Caco-2 (cell line): ENCODE measurements at regions of chr12 and their contacts with region 1.

Region 1: GRCh38 chr12:45191239-45191638 is 24.7 kb upstream of the ANO6 start:
- DNase-seq: no peak
- H3K4me3 ChIP-seq: no peak overlapping the region
- H3K4me3 Mint-ChIP-seq: no peak overlapping the region
- H3K27ac Mint-ChIP-seq: peak overlapping the region; percentile 95
- H3K4me1 ChIP-seq: peaks cover 57% of the 10 kb centered on the region
- H3K4me1 Mint-ChIP-seq: peaks cover 44% of the 10 kb centered on the region
- H3K27me3 ChIP-seq: no peaks in the 10 kb centered on the region
- H3K27me3 Mint-ChIP-seq: no peaks in the 10 kb centered on the region
- CTCF ChIP-seq: no peak

Region 2: DNA sequence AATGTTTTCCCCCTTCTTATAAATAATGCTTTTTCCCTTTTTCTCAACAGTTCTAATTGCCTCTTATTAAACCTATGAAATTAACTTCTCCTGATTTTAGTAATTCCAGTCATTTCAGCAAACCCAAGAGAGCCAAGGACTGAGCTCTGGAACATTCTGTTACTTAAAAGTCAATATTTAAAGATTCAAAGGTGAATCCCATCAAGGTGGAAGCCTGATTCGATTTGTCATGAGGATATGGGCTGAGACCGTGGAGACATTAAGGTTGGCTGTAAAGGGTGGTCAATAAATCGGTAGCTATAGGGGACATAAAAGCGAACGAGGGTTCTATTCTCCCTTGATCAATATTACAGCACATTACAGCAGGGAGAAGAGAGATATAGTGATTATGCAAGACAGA is 248.5 kb before region 1 on chr12:
- CTCF ChIA-PET with region 1: no interaction called
- POLR2A ChIA-PET with region 1: no interaction called
- intact Hi-C with region 1: no loop called
- DNase-seq: no peak
- H3K4me3 ChIP-seq: no peak overlapping the region
- H3K4me3 Mint-ChIP-seq: no peak overlapping the region
- H3K27ac Mint-ChIP-seq: no peak overlapping the region
- H3K4me1 ChIP-seq: peaks cover 10% of the 10 kb centered on the region; the same call in 1 of the 2 replicates
- H3K4me1 Mint-ChIP-seq: peaks cover 9% of the 10 kb centered on the region
- H3K27me3 ChIP-seq: no peaks in the 10 kb centered on the region
- H3K27me3 Mint-ChIP-seq: peaks cover 5% of the 10 kb centered on the region
- CTCF ChIP-seq: no peak

Region 3: GRCh38 chr12:45234139-45234846 is 43.1 kb after region 1 on chr12:
- CTCF ChIA-PET with region 1: no interaction called
- POLR2A ChIA-PET with region 1: no interaction called
- intact Hi-C with region 1: loop called (anchors 1 kb)
- DNase-seq: peak; percentile 47 to 55
- H3K4me3 ChIP-seq: no peak overlapping the region
- H3K4me3 Mint-ChIP-seq: peak overlapping the region; percentile 27
- H3K27ac Mint-ChIP-seq: peak overlapping the region; percentile 77
- H3K4me1 ChIP-seq: peaks cover 59% of the 10 kb centered on the region
- H3K4me1 Mint-ChIP-seq: peaks cover 53% of the 10 kb centered on the region
- H3K27me3 ChIP-seq: no peaks in the 10 kb centered on the region
- H3K27me3 Mint-ChIP-seq: no peaks in the 10 kb centered on the region
- CTCF ChIP-seq: no peak